IMR-90 (cell line): ENCODE measurements at regions of chr1 and their contacts with region 1.

Region 1: DNA sequence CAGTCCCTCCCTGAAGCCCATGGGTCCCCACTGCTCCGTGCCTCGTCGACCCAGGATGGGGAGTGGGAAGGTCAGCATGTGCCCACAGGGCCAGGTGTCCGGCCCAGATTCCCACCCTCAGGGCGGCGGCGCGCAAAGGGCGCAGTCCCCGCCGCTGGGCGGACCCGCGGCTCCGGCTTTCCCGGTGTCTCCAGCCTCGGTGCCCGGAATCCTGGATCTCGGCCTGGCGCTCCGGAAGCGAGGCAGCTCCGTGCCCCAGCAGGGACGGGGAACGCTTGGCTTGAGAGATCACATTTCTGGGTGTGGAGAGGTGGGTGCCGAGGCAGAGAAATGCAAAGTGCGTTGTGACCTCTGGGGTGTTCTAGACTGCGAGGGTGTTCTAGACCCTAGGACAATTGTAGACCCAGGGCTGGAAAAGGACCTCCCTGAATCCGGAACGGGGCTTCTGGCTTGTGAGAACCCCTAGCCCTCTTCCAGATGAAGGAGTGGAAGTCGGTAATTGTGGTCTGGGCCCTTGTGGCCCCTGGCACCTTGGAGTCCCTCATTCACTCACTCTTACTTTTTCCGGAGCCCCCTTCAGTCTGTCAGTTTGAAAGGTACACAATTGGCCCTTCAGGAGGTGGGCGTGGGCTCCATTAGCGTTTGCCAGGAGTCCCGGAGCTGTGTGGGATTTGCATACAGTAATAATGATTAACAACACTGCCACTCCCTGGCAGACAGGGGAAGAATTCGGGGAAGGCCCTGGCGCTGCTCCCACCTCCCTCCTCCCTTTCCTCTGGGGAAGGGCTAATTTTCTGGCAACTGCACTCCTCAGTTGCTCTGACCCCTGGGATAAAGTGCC is 1.6 kb upstream of the KCND3 start:
- DNase-seq: no peak
- ATAC-seq: peak; percentile 30
- H3K4me3 ChIP-seq: no peak overlapping the region
- H3K27ac ChIP-seq: no peak overlapping the region
- H3K4me1 ChIP-seq: no peaks in the 10 kb centered on the region
- H3K27me3 ChIP-seq: peaks cover 63% of the 10 kb centered on the region
- CTCF ChIP-seq: 0 out of 2 replicates have a peak, but pooled peaks have one; percentile 11
- POLR2A ChIP-seq: no peak
- RAD21 ChIP-seq: no peak

Region 2: GRCh38 chr1:111789666-111790316 is 201.3 kb before region 1 on chr1:
- CTCF ChIA-PET with region 1: no interaction called
- POLR2A ChIA-PET with region 1: no interaction called
- dilution Hi-C with region 1: no loop called
- in situ Hi-C with region 1: no loop called
- intact Hi-C with region 1: loop called (anchors 5 kb)
- DNase-seq: no peak
- ATAC-seq: peak; percentile 50
- H3K4me3 ChIP-seq: no peak overlapping the region
- H3K27ac ChIP-seq: no peak overlapping the region
- H3K4me1 ChIP-seq: peaks cover 2% of the 10 kb centered on the region; the same call in 1 of the 2 replicates
- H3K27me3 ChIP-seq: peaks cover 47% of the 10 kb centered on the region
- CTCF ChIP-seq: no peak
- POLR2A ChIP-seq: no peak
- RAD21 ChIP-seq: no peak

Region 3: DNA sequence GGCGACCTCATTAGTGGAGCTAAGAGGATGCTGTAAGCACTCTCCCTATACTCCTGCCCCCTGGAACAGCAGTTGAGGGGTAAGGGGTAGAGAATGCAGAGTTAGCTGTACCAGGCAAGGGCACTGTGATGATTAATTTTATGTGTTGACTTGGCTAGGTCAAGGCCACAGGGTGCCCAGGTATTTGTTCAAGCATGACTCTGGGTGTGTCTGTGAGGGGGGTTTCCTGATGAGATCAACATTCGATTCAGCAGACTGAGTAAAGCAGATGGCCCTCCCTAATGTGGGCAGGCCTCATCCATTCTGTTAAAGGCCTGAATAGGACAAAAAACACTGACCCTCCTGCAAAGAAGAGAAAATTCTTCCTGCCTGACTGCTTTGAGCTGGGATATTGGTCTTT is 112.5 kb before region 1 on chr1:
- CTCF ChIA-PET with region 1: no interaction called
- POLR2A ChIA-PET with region 1: no interaction called
- dilution Hi-C with region 1: no loop called
- in situ Hi-C with region 1: no loop called
- intact Hi-C with region 1: no loop called
- DNase-seq: no peak
- ATAC-seq: peak; percentile 13
- H3K4me3 ChIP-seq: no peak overlapping the region
- H3K27ac ChIP-seq: peak overlapping the region; percentile 71
- H3K4me1 ChIP-seq: peaks cover 15% of the 10 kb centered on the region
- H3K27me3 ChIP-seq: peaks cover 12% of the 10 kb centered on the region
- CTCF ChIP-seq: no peak
- POLR2A ChIP-seq: no peak
- RAD21 ChIP-seq: no peak

Region 4: GRCh38 chr1:112026018-112026417 is 34.9 kb after region 1 on chr1:
- CTCF ChIA-PET with region 1: no interaction called
- POLR2A ChIA-PET with region 1: interaction called, 10 read pairs
- dilution Hi-C with region 1: no loop called
- in situ Hi-C with region 1: no loop called
- intact Hi-C with region 1: no loop called
- DNase-seq: no peak
- ATAC-seq: no peak
- H3K4me3 ChIP-seq: no peak overlapping the region
- H3K27ac ChIP-seq: no peak overlapping the region
- H3K4me1 ChIP-seq: no peaks in the 10 kb centered on the region
- H3K27me3 ChIP-seq: peaks cover 2% of the 10 kb centered on the region; the same call in 1 of the 2 replicates
- CTCF ChIP-seq: no peak
- POLR2A ChIP-seq: no peak
- RAD21 ChIP-seq: no peak